ENCODE measurements at regions of chr16 and their contacts with region 1.

Region 1: GRCh38 chr16:31038993-31039392 is 5.6 kb downstream of the STX4 start:
- DNase-seq: no peak
- H3K4me3 ChIP-seq: no peak overlapping the region
- H3K27ac ChIP-seq: no peak overlapping the region
- H3K4me1 ChIP-seq: peaks cover 0 to 15% (median 11%) of the 10 kb centered on the region in 4 donors
- H3K27me3 ChIP-seq: no peaks in the 10 kb centered on the region
- CTCF ChIP-seq: no peak

Region 2: GRCh38 chr16:31147574-31147973 is 108.6 kb after region 1 on chr16:
- intact Hi-C with region 1: loop called (anchors 2 kb)
- DNase-seq: no peak
- H3K4me3 ChIP-seq: no peak overlapping the region
- H3K27ac ChIP-seq: no peak overlapping the region
- H3K4me1 ChIP-seq: peaks cover 0 to 13% (median 5%) of the 10 kb centered on the region in 4 donors
- H3K27me3 ChIP-seq: peaks cover 0 to 38% of the 10 kb centered on the region in 2 donors
- CTCF ChIP-seq: no peak

Region 3: DNA sequence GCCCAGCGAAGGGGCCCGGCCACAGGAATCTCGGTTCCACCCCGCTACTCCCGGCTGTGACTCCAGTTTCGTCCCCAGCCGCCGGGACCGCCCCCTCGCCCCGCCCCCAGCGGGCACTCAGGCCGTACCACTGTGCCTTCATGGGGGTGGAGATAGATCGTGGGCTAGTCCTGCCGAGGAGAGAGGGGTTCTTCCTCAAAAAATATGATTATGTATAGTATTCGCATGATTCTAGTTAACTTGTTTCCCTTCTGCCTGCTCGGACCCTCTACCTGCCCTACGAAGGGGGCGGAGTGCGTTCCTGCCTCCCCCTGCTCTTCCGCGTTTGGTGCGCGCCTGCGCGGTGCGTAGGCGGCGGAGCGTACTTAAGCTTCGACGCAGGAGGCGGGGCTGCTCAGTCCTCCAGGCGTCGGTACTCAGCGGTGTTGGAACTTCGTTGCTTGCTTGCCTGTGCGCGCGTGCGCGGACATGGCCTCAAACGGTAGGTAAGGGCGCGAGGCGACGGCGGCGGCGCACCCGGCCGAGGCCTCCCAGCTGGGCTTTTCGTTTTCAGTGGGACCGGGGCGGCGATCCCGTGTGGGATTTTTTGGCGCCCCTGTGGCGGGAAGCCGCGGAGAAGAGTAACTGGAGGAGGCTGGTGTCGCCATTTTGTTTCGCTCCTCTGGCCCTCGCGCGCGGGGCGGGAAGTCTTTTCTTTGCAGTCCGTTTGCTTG is 140.9 kb after region 1 on chr16 and contains the start of gene FUS:
- intact Hi-C with region 1: no loop called
- DNase-seq: peak; percentile 89 to 94
- H3K4me3 ChIP-seq: peak within 1 kb of the TSS; percentile 78 to 100
- H3K27ac ChIP-seq: peak within 1 kb of the TSS; percentile 95 to 100
- H3K4me1 ChIP-seq: peaks cover 0 to 39% (median 37%) of the 10 kb centered on the region in 4 donors
- H3K27me3 ChIP-seq: no peaks in the 10 kb centered on the region
- CTCF ChIP-seq: peak in 1 of 2 experiments; percentile 16